CD14-positive monocyte (primary cell): ENCODE measurements at regions of chr20 and their contacts with region 1.

Region 1: DNA sequence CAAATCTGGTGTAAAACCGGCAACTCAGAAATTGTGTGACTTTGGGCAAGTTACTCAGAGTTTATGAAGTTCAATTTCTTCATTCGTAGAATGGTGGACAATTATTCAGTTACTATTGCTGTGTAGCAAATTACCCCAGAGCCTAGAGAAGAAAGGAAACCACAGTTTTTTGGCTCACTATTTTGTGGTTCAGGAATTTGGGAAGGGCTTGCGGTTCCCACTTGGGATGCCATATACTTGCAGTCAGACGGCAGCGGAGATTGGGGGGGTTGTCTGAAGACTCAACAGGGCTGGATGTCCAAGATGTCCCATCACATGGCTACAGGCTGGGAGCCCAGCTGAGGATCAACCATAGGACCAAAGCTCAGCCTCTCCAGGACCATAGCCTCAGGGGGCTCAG is 108.1 kb downstream of the PCSK2 start:
- DNase-seq: no peak
- H3K4me3 ChIP-seq: no peak overlapping the region
- H3K4me3 Mint-ChIP-seq: no peak overlapping the region
- H3K27ac ChIP-seq: no peak overlapping the region
- H3K27ac Mint-ChIP-seq: no peak overlapping the region
- H3K4me1 ChIP-seq: no peaks in the 10 kb centered on the region
- H3K4me1 Mint-ChIP-seq: no peaks in the 10 kb centered on the region
- H3K27me3 ChIP-seq: no peaks in the 10 kb centered on the region
- H3K27me3 Mint-ChIP-seq: no peaks in the 10 kb centered on the region
- CTCF ChIP-seq: no peak

Region 2: DNA sequence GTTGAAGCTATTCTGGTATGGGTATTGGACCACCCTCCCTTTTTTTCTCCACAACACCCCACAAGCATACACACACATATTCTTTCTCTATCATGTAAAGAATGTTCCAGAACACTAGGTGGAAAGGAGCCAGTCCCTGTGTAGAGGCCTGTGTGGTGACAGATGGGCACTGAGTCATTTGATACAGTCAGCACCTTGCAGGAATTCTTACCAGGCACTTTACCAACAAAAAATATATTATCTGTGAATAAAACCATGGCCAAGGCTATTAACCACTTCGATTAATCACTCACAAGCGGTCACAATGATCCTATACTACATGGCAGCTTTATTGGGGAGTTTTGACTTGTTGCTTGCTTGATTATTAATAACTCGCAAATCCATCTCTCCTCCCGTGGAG is 46.8 kb after region 1 on chr20:
- intact Hi-C with region 1: loop called in 1 of 2 experiments (anchors 5 kb)
- DNase-seq: no peak
- H3K4me3 ChIP-seq: no peak overlapping the region
- H3K4me3 Mint-ChIP-seq: no peak overlapping the region
- H3K27ac ChIP-seq: no peak overlapping the region
- H3K27ac Mint-ChIP-seq: no peak overlapping the region
- H3K4me1 ChIP-seq: no peaks in the 10 kb centered on the region
- H3K4me1 Mint-ChIP-seq: no peaks in the 10 kb centered on the region
- H3K27me3 ChIP-seq: no peaks in the 10 kb centered on the region
- H3K27me3 Mint-ChIP-seq: peaks cover 0 to 2% (median 0%) of the 10 kb centered on the region in 3 donors
- CTCF ChIP-seq: no peak

Region 3: DNA sequence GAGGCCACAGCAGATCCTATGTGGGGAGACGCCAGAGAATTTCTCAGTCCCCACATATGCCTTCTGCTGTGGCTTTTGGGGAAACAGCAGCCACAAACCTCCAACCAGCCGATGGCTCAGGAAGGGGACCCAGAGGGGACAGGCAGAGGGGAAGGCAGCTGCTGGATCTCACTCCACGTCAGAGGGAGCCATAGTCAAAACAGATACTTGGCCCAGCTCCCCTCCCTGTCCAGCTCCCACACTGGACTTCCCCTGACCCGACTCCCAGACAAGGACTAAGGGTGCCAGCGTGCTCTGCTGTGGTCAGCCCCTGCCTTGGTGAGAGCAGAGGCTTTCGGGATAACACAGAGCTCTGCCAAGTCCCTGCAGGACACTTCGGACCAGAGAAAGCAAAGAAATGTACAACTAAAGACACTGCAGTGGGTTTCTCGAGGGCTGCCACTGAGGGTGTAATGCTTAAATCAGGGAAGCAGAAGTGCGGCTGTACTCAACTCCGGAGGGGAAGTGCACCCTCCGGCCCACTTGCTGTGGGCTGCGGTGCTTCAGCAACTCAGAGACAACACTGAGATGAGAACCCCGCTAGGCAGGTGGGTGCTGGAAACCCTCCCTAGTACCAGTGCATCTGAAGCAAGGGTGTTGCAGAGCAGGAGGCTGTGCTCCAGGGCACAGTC is 299.9 kb after region 1 on chr20:
- intact Hi-C with region 1: no loop called
- DNase-seq: peak; percentile 14 to 49 (median 28)
- H3K4me3 ChIP-seq: no peak overlapping the region
- H3K4me3 Mint-ChIP-seq: no peak overlapping the region
- H3K27ac ChIP-seq: peak overlapping the region; percentile 51 to 70
- H3K27ac Mint-ChIP-seq: peak overlapping the region; percentile 75 to 93 (median 85)
- H3K4me1 ChIP-seq: peaks cover 12 to 13% of the 10 kb centered on the region in 2 donors
- H3K4me1 Mint-ChIP-seq: peaks cover 20% of the 10 kb centered on the region
- H3K27me3 ChIP-seq: no peaks in the 10 kb centered on the region
- H3K27me3 Mint-ChIP-seq: peaks cover 0 to 1% (median 0%) of the 10 kb centered on the region in 3 donors
- CTCF ChIP-seq: no peak

Region 4: DNA sequence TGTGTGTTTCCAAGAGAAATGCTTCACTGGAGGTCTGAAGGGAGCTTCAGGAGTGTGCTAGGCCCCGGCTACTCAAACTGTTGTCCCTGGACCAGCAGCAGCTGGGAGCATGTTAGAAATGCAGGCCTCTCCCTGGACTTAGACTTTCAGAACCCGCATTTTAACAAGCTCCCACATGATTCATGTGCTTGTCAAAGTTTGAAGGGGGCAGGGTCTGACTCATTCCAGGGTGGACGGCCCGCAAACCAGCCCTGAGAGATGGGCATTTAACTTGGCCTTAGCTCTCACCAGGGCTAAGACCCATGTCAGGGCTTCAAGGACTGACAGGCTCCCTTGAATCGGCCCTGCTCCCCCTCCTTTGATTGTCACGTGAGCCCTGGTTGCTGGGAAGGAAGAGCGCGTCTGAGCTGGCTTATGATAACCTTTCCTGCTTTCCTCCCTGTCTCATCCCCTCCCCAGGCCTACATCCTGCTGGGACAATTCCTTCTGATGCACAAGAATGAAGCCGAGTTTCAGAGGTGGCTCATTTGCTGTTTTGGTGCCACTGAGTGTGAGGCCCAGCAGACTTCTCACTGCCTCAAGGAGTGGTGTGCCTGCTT is 400.4 kb after region 1 on chr20:
- intact Hi-C with region 1: no loop called
- DNase-seq: no peak
- H3K4me3 ChIP-seq: no peak overlapping the region
- H3K4me3 Mint-ChIP-seq: no peak overlapping the region
- H3K27ac ChIP-seq: no peak overlapping the region
- H3K27ac Mint-ChIP-seq: peak overlapping the region in 2 of 7 donors; percentile 7 to 18
- H3K4me1 ChIP-seq: no peaks in the 10 kb centered on the region
- H3K4me1 Mint-ChIP-seq: no peaks in the 10 kb centered on the region
- H3K27me3 ChIP-seq: no peaks in the 10 kb centered on the region
- H3K27me3 Mint-ChIP-seq: peaks cover 0 to 5% (median 4%) of the 10 kb centered on the region in 3 donors
- CTCF ChIP-seq: no peak